GM12878 (cell line): ENCODE measurements at regions of chr11 and their contacts with region 1.

Region 1: DNA sequence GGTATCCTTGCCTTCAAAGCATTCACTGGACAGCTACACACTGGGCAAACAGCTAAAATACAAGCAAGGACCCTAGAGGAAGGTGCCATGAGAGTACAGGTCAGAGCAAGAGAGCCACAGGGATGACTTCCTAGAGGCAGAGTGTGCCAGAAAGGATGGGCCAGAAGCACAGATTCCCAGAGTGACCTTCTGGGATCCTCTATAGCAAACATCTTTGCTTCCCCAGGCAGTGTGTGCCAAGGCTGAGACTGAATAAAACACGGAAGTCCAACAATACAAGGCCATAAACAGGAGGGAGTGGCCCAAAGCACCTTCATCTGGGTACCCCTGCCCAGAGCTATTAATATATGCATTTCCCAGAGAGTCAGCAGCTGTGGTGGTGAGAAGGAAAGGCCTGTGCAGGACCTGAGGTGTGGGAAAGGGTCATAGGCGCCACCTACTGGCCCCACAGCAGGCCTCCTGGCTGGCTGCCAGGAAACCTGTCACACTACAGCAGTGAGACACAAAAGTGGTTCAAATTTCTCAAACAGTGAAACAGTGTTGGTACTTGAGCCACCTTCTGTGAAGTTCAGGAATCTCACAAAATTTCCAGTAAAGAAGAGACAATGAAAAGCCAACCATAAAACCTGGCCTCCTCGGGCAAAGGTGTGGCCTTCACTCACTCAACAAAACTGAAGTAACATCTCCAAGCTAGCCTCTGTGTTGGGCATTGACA is 20.3 kb downstream of the CLPB start:
- DNase-seq: no peak
- ATAC-seq: peak; percentile 83
- H3K4me3 ChIP-seq: no peak overlapping the region
- H3K27ac ChIP-seq: peak overlapping the region; percentile 53
- H3K4me1 ChIP-seq: peaks cover 23% of the 10 kb centered on the region
- H3K27me3 ChIP-seq: no peaks in the 10 kb centered on the region
- CTCF ChIP-seq: peak; percentile 92 to 98 (median 96); a peak in 5 of 6 replicates
- EP300 ChIP-seq: no peak
- POLR2A ChIP-seq: no peak
- RAD21 ChIP-seq: peak; percentile 81

Region 2: GRCh38 chr11:72141066-72141465 is 273.0 kb before region 1 on chr11:
- CTCF ChIA-PET with region 1: interaction called, 18 read pairs
- POLR2A ChIA-PET with region 1: no interaction called
- RAD21 ChIA-PET with region 1: interaction called, 3 read pairs
- SMC1A ChIA-PET with region 1: interaction called, 14 read pairs
- in situ Hi-C with region 1: no loop called
- intact Hi-C with region 1: no loop called
- DNase-seq: no peak
- ATAC-seq: no peak
- H3K4me3 ChIP-seq: no peak overlapping the region
- H3K27ac ChIP-seq: no peak overlapping the region
- H3K4me1 ChIP-seq: no peaks in the 10 kb centered on the region
- H3K27me3 ChIP-seq: no peaks in the 10 kb centered on the region; a peak in 1 of 4 replicates
- CTCF ChIP-seq: no peak
- EP300 ChIP-seq: no peak
- POLR2A ChIP-seq: no peak
- RAD21 ChIP-seq: no peak

Region 3: GRCh38 chr11:72238040-72238450 is 176.0 kb before region 1 on chr11:
- CTCF ChIA-PET with region 1: interaction called, 5 read pairs
- POLR2A ChIA-PET with region 1: no interaction called
- RAD21 ChIA-PET with region 1: interaction called, 3 read pairs
- SMC1A ChIA-PET with region 1: interaction called, 6 read pairs
- in situ Hi-C with region 1: no loop called
- intact Hi-C with region 1: loop called (anchors 5 kb)
- DNase-seq: no peak
- ATAC-seq: peak; percentile 76
- H3K4me3 ChIP-seq: no peak overlapping the region
- H3K27ac ChIP-seq: no peak overlapping the region
- H3K4me1 ChIP-seq: peaks cover 4% of the 10 kb centered on the region
- H3K27me3 ChIP-seq: peaks cover 5 to 11% of the 10 kb centered on the region in 2 experiments; a peak in 3 of 4 replicates
- CTCF ChIP-seq: peak; percentile 52 to 84 (median 74)
- EP300 ChIP-seq: no peak
- POLR2A ChIP-seq: 0 out of 2 replicates have a peak, but pooled peaks have one; percentile 16
- RAD21 ChIP-seq: peak; percentile 63

Region 4: GRCh38 chr11:72328366-72329224 is 85.5 kb before region 1 on chr11:
- CTCF ChIA-PET with region 1: interaction called, 20 read pairs
- POLR2A ChIA-PET with region 1: no interaction called
- RAD21 ChIA-PET with region 1: interaction called, 3 read pairs
- SMC1A ChIA-PET with region 1: interaction called, 4 read pairs
- in situ Hi-C with region 1: no loop called
- intact Hi-C with region 1: loop called (anchors 1 kb)
- DNase-seq: no peak
- ATAC-seq: no peak
- H3K4me3 ChIP-seq: no peak overlapping the region
- H3K27ac ChIP-seq: no peak overlapping the region
- H3K4me1 ChIP-seq: no peaks in the 10 kb centered on the region
- H3K27me3 ChIP-seq: no peaks in the 10 kb centered on the region
- CTCF ChIP-seq: peak in 1 of 3 experiments; percentile 7; a peak in 1 of 6 replicates
- EP300 ChIP-seq: no peak
- POLR2A ChIP-seq: no peak
- RAD21 ChIP-seq: 0 out of 2 replicates have a peak, but pooled peaks have one; percentile 17

Region 5: GRCh38 chr11:72352859-72353551 is 61.1 kb before region 1 on chr11:
- CTCF ChIA-PET with region 1: interaction called, 20 read pairs
- POLR2A ChIA-PET with region 1: interaction called, 4 read pairs
- RAD21 ChIA-PET with region 1: interaction called, 8 read pairs
- SMC1A ChIA-PET with region 1: interaction called, 7 read pairs
- in situ Hi-C with region 1: no loop called
- intact Hi-C with region 1: loop called (anchors 2 kb)
- DNase-seq: peak; percentile 47
- ATAC-seq: peak; percentile 96
- H3K4me3 ChIP-seq: 0 out of 2 replicates have a peak overlapping the region, but pooled peaks have one; percentile 27
- H3K27ac ChIP-seq: peak overlapping the region; percentile 69
- H3K4me1 ChIP-seq: peaks cover 15% of the 10 kb centered on the region
- H3K27me3 ChIP-seq: no peaks in the 10 kb centered on the region
- CTCF ChIP-seq: peak; percentile 43 to 82 (median 49); a peak in 5 of 6 replicates
- EP300 ChIP-seq: peak in 1 of 2 experiments; percentile 14; a peak in 1 of 4 replicates
- POLR2A ChIP-seq: no peak
- RAD21 ChIP-seq: peak; percentile 82

Region 6: GRCh38 chr11:72425053-72425980 is 11.2 kb after region 1 on chr11:
- CTCF ChIA-PET with region 1: interaction called, 378 read pairs
- POLR2A ChIA-PET with region 1: no interaction called
- RAD21 ChIA-PET with region 1: interaction called, 53 read pairs
- SMC1A ChIA-PET with region 1: interaction called, 60 read pairs
- in situ Hi-C with region 1: no loop called
- intact Hi-C with region 1: no loop called
- DNase-seq: no peak
- ATAC-seq: no peak
- H3K4me3 ChIP-seq: no peak overlapping the region
- H3K27ac ChIP-seq: no peak overlapping the region
- H3K4me1 ChIP-seq: no peaks in the 10 kb centered on the region
- H3K27me3 ChIP-seq: no peaks in the 10 kb centered on the region
- CTCF ChIP-seq: no peak
- EP300 ChIP-seq: no peak
- POLR2A ChIP-seq: no peak
- RAD21 ChIP-seq: no peak

Region 7: DNA sequence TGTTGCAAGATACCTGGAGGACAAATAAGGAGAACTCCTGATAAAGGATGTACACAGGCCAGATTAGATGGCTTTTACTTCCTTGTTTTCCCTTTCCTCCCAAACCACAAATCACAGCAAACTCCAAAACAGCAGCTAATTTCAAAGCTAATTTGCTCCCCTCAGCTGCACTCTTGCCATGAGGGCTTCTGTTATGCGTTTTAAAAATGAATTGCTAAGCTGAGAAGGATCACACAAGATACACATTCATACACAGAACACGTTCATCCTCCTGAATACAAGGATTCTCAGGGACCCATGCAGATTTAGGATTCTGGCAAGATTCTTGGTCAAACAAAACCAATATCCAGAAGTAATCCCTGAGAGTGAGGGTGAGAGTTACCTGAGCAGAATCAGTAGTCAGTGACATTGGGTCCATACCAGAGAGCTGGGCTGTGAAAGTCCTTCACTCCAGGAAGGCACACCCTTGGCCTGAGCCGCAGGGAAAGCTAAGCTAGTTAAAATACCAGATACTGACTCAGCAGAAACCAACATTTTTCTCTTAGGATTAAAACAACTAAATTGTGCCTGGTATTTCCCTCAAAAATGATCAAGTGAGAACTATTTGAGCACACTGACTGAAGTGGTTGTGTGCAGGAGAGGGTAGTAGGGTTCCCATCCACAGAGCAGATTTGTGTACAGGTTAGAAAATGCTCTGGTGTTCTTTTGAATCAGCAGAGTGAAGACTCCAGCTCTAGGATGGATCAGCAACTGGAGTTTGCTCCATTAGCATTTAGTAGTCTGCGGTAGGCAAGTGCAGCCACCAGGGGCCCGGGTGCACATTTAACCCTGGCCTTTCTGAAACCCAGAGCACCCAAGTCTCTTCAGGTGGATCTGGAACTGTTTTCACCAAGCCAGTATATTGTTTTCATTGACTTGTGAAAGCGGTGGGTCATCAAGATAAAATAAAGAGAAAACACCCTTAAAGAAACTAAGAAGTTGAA is 120.8 kb after region 1 on chr11:
- CTCF ChIA-PET with region 1: no interaction called
- POLR2A ChIA-PET with region 1: no interaction called
- RAD21 ChIA-PET with region 1: no interaction called
- SMC1A ChIA-PET with region 1: no interaction called
- in situ Hi-C with region 1: no loop called
- intact Hi-C with region 1: no loop called
- DNase-seq: no peak
- ATAC-seq: peak; percentile 42; the same call in 1 of the 3 replicates
- H3K4me3 ChIP-seq: no peak overlapping the region
- H3K27ac ChIP-seq: no peak overlapping the region
- H3K4me1 ChIP-seq: no peaks in the 10 kb centered on the region
- H3K27me3 ChIP-seq: no peaks in the 10 kb centered on the region
- CTCF ChIP-seq: 0 out of 6 replicates have a peak, but pooled peaks of 1 of the 3 experiments have one; percentile 4
- EP300 ChIP-seq: no peak
- POLR2A ChIP-seq: no peak
- RAD21 ChIP-seq: no peak